ENCODE measurements at regions of chr5 and their contacts with region 1.

Region 1: GRCh38 chr5:16727755-16728325 is 111.0 kb upstream of the RETREG1 start:
- DNase-seq: peak; percentile 78
- H3K4me3 ChIP-seq: no peak overlapping the region
- H3K27ac ChIP-seq: peak overlapping the region; percentile 64
- H3K4me1 ChIP-seq: peaks cover 37% of the 10 kb centered on the region
- H3K27me3 ChIP-seq: no peaks in the 10 kb centered on the region
- CTCF ChIP-seq: no peak
- POLR2A ChIP-seq: no peak

Region 2: DNA sequence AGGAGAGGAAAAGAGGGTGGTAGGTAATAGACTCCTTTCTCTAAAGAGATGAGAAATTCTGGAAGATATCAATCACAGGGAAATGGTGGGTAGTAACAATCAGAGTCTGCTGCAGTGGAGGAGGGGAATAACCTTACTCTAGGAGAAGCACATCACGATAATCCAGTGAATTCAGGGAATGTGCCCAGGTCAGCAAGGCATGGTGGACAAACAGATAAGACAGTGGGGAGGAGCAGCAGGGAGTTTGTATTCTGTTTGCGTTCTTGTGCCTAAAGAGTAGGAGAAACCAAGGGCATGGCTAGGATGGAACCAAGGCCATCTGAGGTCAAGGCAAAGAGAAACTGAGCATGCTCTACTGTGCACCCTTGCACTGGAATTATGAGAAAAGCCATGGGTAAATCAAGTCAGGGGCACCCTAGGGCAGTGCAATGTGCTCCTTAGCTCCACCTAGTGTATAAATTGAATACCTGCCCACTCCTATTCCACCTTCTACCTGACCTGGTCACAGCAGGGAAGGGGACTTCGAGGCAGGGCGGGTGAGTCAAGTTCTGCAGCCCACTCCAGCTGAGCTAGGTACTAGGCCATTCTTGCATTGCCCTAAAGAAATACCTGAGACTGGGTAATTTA is 142.7 kb before region 1 on chr5:
- CTCF ChIA-PET with region 1: no interaction called
- POLR2A ChIA-PET with region 1: no interaction called
- dilution Hi-C with region 1: no loop called
- intact Hi-C with region 1: no loop called
- DNase-seq: no peak
- H3K4me3 ChIP-seq: no peak overlapping the region
- H3K27ac ChIP-seq: no peak overlapping the region
- H3K4me1 ChIP-seq: no peaks in the 10 kb centered on the region
- H3K27me3 ChIP-seq: peaks cover 0 to 4% of the 10 kb centered on the region in 2 experiments
- CTCF ChIP-seq: peak; percentile 32 to 51
- POLR2A ChIP-seq: no peak

Region 3: GRCh38 chr5:16701134-16702099 is 26.4 kb before region 1 on chr5:
- CTCF ChIA-PET with region 1: interaction called, 4 read pairs
- POLR2A ChIA-PET with region 1: interaction called, 3 read pairs
- dilution Hi-C with region 1: no loop called
- intact Hi-C with region 1: loop called (anchors 1 kb)
- DNase-seq: no peak
- H3K4me3 ChIP-seq: no peak overlapping the region
- H3K27ac ChIP-seq: no peak overlapping the region
- H3K4me1 ChIP-seq: peaks cover 38% of the 10 kb centered on the region
- H3K27me3 ChIP-seq: no peaks in the 10 kb centered on the region
- CTCF ChIP-seq: no peak
- POLR2A ChIP-seq: no peak

Region 4: DNA sequence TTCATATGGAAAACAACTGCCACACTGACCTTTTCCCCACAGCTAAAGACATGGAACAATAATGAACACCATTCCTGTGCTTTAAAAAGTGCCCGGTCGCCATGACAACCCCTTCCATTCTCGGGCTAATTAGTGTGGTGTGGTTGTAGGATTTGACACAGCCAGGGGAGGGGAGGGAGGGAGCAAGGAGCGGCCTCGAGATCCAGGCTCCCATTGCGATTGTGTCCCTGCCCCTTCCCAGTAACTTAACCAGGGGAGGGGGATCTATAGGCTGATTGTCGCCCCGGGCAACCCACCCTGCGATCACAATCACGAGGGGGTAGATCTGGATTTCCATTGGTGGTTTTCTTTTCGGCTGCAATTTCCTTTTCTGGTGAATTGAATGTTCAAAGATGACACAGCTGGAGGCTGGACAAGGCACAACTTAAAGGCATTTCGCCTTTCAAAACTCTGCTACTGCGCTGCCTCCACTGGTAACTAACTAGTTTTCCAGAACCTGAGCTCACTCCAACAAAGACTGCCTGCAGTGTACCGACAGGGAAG is 14.4 kb before region 1 on chr5:
- CTCF ChIA-PET with region 1: interaction called, 5 read pairs
- POLR2A ChIA-PET with region 1: no interaction called
- dilution Hi-C with region 1: no loop called
- intact Hi-C with region 1: loop called (anchors 1 kb)
- DNase-seq: peak; percentile 60
- H3K4me3 ChIP-seq: no peak overlapping the region
- H3K27ac ChIP-seq: peak overlapping the region; percentile 16
- H3K4me1 ChIP-seq: peaks cover 18% of the 10 kb centered on the region
- H3K27me3 ChIP-seq: no peaks in the 10 kb centered on the region
- CTCF ChIP-seq: no peak
- POLR2A ChIP-seq: no peak

Region 5: DNA sequence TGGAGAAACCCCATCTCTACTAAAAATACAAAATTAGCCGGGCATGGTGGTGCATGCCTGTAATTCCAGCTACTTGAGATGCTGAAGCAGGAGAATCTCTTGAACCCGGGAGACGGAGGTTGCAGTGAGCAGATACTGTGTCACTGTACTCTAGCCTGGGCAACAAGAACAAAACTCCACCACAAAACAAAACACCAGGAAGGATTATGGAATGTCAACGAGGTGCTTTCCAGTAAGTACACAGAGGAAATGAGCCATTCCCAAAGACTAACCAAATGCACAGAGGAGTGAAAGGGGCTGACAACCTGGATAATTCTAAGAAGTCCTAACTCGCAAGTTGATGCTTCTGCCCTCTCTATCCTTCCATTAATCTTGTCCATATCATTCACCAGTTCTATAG is 15.1 kb after region 1 on chr5:
- CTCF ChIA-PET with region 1: interaction called, 4 read pairs
- POLR2A ChIA-PET with region 1: interaction called, 4 read pairs
- dilution Hi-C with region 1: no loop called
- intact Hi-C with region 1: loop called (anchors 1 kb)
- DNase-seq: peak; percentile 50
- H3K4me3 ChIP-seq: no peak overlapping the region
- H3K27ac ChIP-seq: peak overlapping the region; percentile 83
- H3K4me1 ChIP-seq: peaks cover 20% of the 10 kb centered on the region
- H3K27me3 ChIP-seq: no peaks in the 10 kb centered on the region
- CTCF ChIP-seq: no peak
- POLR2A ChIP-seq: no peak

Region 6: DNA sequence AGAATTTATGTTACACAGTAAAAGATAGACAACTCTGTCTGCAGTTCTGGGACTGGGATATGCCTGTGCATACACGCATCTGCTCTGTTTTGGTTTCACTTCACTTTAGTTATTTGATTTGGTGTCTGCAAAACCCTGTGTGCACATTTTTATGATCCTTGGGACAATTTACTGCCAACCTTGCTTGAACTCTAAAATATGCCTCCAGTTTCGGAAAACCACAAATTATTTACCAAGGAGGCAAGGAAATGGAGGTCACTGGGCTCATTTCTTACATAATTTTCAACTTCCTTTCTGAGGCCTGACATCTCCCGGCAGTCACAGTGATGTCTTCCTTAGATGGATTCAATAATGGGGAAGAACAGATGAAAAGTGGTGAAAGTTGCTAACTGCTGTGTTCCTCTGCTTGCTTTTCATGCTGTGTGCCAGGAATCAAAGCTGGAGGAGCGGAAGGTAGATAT is 709.0 kb after region 1 on chr5:
- CTCF ChIA-PET with region 1: no interaction called
- POLR2A ChIA-PET with region 1: no interaction called
- dilution Hi-C with region 1: no loop called
- intact Hi-C with region 1: no loop called
- DNase-seq: peak; percentile 81
- H3K4me3 ChIP-seq: peak overlapping the region in 2 of 3 experiments; percentile 8 to 21
- H3K27ac ChIP-seq: no peak overlapping the region
- H3K4me1 ChIP-seq: peaks cover 7% of the 10 kb centered on the region
- H3K27me3 ChIP-seq: no peaks in the 10 kb centered on the region
- CTCF ChIP-seq: no peak
- POLR2A ChIP-seq: no peak

Measured in endothelial cell of umbilical vein (primary cell).